ENCODE measurements at regions of chr7 and their contacts with region 1.

Region 1: GRCh38 chr7:71131256-71132126 is 453 bp upstream of the GALNT17 start:
- DNase-seq: peak; percentile 27 to 56
- ATAC-seq: peak; percentile 78 to 92 (median 84)
- H3K4me3 ChIP-seq: peak overlapping the region; percentile 52 to 70 (median 60)
- H3K27ac ChIP-seq: peak overlapping the region; percentile 40 to 91 (median 82)
- H3K4me1 ChIP-seq: peaks cover 0 to 9% (median 0%) of the 10 kb centered on the region in 9 donors
- H3K27me3 ChIP-seq: peaks cover 6 to 40% (median 31%) of the 10 kb centered on the region in 7 donors
- CTCF ChIP-seq: peak in 4 of 9 donors; percentile 14 to 47 (median 39)

Region 2: GRCh38 chr7:71220210-71220695 is 88.8 kb after region 1 on chr7:
- intact Hi-C with region 1: loop called in 2 of 10 experiments (anchors 5 kb)
- DNase-seq: no peak
- ATAC-seq: peak; percentile 44 to 97 (median 91)
- H3K4me3 ChIP-seq: no peak overlapping the region
- H3K27ac ChIP-seq: peak overlapping the region; percentile 4 to 83 (median 58)
- H3K4me1 ChIP-seq: peaks cover 0 to 4% (median 0%) of the 10 kb centered on the region in 9 donors
- H3K27me3 ChIP-seq: no peaks in the 10 kb centered on the region
- CTCF ChIP-seq: peak in 3 of 9 donors; percentile 15 to 27 (median 26)

Region 3: GRCh38 chr7:71408271-71408670 is 276.8 kb after region 1 on chr7:
- intact Hi-C with region 1: loop called in 2 of 10 experiments (anchors 5 kb)
- DNase-seq: peak; percentile 66 to 75
- ATAC-seq: peak; percentile 88 to 98 (median 95)
- H3K4me3 ChIP-seq: no peak overlapping the region
- H3K27ac ChIP-seq: peak overlapping the region in 5 of 10 donors; percentile 45 to 72 (median 57)
- H3K4me1 ChIP-seq: peaks cover 0 to 28% (median 10%) of the 10 kb centered on the region in 9 donors
- H3K27me3 ChIP-seq: no peaks in the 10 kb centered on the region
- CTCF ChIP-seq: no peak

Region 4: DNA sequence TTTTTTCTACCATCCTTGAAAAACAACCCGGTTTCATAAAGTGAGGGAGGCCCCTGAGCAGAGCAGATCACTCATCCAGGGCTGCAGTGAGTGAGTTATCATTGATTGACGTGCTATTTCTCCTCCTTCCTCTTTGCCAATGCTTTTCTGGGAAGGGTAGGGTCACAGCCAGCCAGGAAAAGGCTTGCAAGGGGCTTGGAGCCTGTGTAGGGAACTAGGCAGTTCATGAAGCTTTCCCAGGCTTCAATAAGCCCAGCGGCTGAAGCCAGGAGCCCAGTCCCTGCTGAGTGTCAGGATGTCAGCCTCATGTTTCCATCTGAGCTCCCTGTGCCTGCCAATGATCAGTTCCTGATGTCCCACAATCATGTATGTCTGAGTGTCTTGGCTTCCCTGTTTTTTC is 585.2 kb after region 1 on chr7:
- intact Hi-C with region 1: loop called in 1 of 10 experiments (anchors 10 kb)
- DNase-seq: no peak
- ATAC-seq: peak in 6 of 8 donors; percentile 30 to 71 (median 44)
- H3K4me3 ChIP-seq: no peak overlapping the region
- H3K27ac ChIP-seq: no peak overlapping the region
- H3K4me1 ChIP-seq: peaks cover 0 to 9% (median 3%) of the 10 kb centered on the region in 9 donors
- H3K27me3 ChIP-seq: peaks cover 0 to 5% (median 0%) of the 10 kb centered on the region in 7 donors
- CTCF ChIP-seq: no peak

Measured in heart right ventricle (tissue), 16 donors.